Spleen (tissue), 13 donors: ENCODE measurements at regions of chr6 and their contacts with region 1.

Region 1: GRCh38 chr6:149438855-149439254 is 38.8 kb downstream of the SUMO4 start:
- DNase-seq: no peak
- H3K4me3 ChIP-seq: no peak overlapping the region
- H3K27ac ChIP-seq: no peak overlapping the region
- H3K4me1 ChIP-seq: peaks cover 0 to 7% (median 0%) of the 10 kb centered on the region in 6 donors
- H3K27me3 ChIP-seq: no peaks in the 10 kb centered on the region
- CTCF ChIP-seq: no peak
- POLR2A ChIP-seq: no peak

Region 2: GRCh38 chr6:149028767-149029405 is 410.0 kb before region 1 on chr6:
- intact Hi-C with region 1: loop called (anchors 5 kb)
- DNase-seq: no peak
- H3K4me3 ChIP-seq: no peak overlapping the region
- H3K27ac ChIP-seq: no peak overlapping the region
- H3K4me1 ChIP-seq: peaks cover 0 to 36% (median 23%) of the 10 kb centered on the region in 6 donors
- H3K27me3 ChIP-seq: no peaks in the 10 kb centered on the region
- CTCF ChIP-seq: peak; percentile 28 to 75 (median 63)
- POLR2A ChIP-seq: no peak

Region 3: GRCh38 chr6:149354009-149354408 is 84.8 kb before region 1 on chr6:
- intact Hi-C with region 1: no loop called
- DNase-seq: no peak
- H3K4me3 ChIP-seq: no peak overlapping the region
- H3K27ac ChIP-seq: no peak overlapping the region
- H3K4me1 ChIP-seq: peaks cover 3 to 94% (median 30%) of the 10 kb centered on the region in 6 donors
- H3K27me3 ChIP-seq: no peaks in the 10 kb centered on the region
- CTCF ChIP-seq: no peak
- POLR2A ChIP-seq: no peak